ENCODE measurements at regions of chr17 and their contacts with region 1.

Region 1: DNA sequence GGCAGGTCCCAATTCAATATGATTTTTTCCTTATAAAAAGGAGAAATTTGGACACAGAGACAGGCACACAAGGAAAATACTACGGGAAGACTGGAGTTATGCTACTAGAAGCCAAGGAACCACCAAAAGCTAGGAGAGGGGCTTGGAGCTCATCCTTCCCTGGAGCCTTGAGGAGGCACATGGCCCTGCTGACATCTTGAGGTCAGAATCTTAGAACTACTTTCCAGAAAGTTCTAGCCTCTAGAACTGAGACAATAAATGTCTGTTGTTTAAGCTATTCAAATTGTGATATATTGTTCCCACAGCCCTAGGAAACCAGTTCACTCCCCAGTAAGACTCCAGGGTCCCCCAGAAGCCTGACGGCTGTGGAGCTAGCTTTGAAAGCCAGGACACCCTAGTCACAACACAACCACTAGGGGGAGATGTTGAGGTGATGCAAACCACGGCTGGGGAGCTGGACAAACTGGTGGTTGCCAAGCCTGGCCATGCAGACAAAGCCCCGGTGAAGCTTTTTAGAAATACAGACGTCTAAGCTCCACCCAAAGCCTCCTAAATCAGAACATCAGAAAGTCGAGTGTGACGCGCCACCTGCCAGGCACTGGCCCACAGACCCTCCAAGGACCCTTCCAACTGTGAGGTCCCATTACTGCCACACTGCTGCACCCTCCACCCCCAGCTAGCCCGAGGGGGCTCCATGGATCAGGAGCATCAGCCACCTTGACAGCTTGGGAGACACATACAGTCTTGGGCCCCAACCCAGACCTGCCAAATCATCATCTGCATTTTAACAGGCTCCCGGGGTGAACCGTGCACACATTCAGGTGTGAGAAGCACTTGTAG is 106.4 kb downstream of the SLC39A11 start:
- DNase-seq: peak; percentile 70
- ATAC-seq: peak; percentile 74
- H3K4me3 ChIP-seq: no peak overlapping the region
- H3K27ac ChIP-seq: peak overlapping the region; percentile 77; the same call in 1 of the 2 replicates
- H3K4me1 ChIP-seq: peaks cover 31 to 38% of the 10 kb centered on the region in 2 experiments
- H3K27me3 ChIP-seq: no peaks in the 10 kb centered on the region
- CTCF ChIP-seq: peak; percentile 80 to 99 (median 99)
- POLR2A ChIP-seq: no peak
- RAD21 ChIP-seq: peak; percentile 79

Region 2: DNA sequence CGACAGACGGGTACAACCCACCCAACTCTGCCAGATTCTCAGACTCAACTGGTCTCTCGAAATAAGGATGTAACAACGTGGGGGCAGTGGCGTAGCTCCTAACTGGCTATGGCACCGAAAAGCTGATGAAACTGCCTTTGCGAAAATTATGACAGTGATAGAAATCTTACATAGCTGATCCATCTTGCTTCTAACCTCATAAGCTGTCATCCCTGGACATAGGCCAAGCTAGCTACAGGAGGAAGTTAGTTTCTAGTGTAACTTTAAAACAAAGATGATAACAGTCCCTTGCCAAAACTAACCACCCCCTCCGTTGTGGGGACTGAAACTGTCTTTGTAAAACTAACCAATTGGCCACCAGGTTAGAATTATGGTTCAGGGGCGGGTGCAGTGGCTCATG is 113.7 kb before region 1 on chr17:
- CTCF ChIA-PET with region 1: no interaction called
- POLR2A ChIA-PET with region 1: no interaction called
- RAD21 ChIA-PET with region 1: no interaction called
- intact Hi-C with region 1: no loop called
- DNase-seq: no peak
- ATAC-seq: no peak
- H3K4me3 ChIP-seq: no peak overlapping the region
- H3K27ac ChIP-seq: no peak overlapping the region
- H3K4me1 ChIP-seq: 0 out of 4 replicates have a peak, but pooled peaks cover 0 to 4% of the 10 kb centered on the region in 2 experiments
- H3K27me3 ChIP-seq: no peaks in the 10 kb centered on the region
- CTCF ChIP-seq: no peak
- POLR2A ChIP-seq: no peak
- RAD21 ChIP-seq: no peak

Region 3: DNA sequence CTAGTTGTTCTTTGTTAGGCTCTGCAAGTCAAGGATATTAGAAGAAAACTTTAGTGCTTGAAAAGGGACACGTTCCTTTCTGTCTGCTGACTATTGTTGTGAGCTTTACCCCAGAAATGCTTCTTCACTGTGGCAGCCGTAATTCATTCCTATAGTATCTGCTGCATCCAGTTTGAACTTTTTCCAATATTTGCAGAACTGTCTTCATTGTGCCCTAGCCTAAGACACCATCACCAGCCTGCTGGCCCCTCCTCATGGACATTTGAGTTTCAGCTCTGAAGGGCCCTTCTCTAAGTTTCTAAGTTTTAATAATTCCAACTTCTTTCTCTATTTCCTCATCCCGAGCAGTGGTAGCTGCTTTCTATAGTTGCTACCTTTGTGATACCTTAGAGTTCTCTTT is 14.7 kb after region 1 on chr17:
- CTCF ChIA-PET with region 1: interaction called, 11 read pairs
- POLR2A ChIA-PET with region 1: no interaction called
- RAD21 ChIA-PET with region 1: no interaction called
- intact Hi-C with region 1: no loop called
- DNase-seq: no peak
- ATAC-seq: no peak
- H3K4me3 ChIP-seq: no peak overlapping the region
- H3K27ac ChIP-seq: no peak overlapping the region
- H3K4me1 ChIP-seq: peaks cover 4 to 9% of the 10 kb centered on the region in 2 experiments; a peak in 3 of 4 replicates
- H3K27me3 ChIP-seq: no peaks in the 10 kb centered on the region
- CTCF ChIP-seq: no peak
- POLR2A ChIP-seq: no peak
- RAD21 ChIP-seq: no peak

Region 4: GRCh38 chr17:73156166-73156840 is 170.2 kb after region 1 on chr17:
- CTCF ChIA-PET with region 1: interaction called, 35 read pairs
- POLR2A ChIA-PET with region 1: interaction called, 4 read pairs
- RAD21 ChIA-PET with region 1: interaction called, 5 to 9 read pairs
- intact Hi-C with region 1: loop called (anchors 1 kb)
- DNase-seq: peak; percentile 23
- ATAC-seq: peak; percentile 99
- H3K4me3 ChIP-seq: no peak overlapping the region; a peak in 1 of 4 replicates
- H3K27ac ChIP-seq: no peak overlapping the region
- H3K4me1 ChIP-seq: peaks cover 2 to 12% of the 10 kb centered on the region in 2 experiments; a peak in 2 of 4 replicates
- H3K27me3 ChIP-seq: no peaks in the 10 kb centered on the region
- CTCF ChIP-seq: peak; percentile 85 to 97 (median 93)
- POLR2A ChIP-seq: no peak
- RAD21 ChIP-seq: peak; percentile 94

Region 5: DNA sequence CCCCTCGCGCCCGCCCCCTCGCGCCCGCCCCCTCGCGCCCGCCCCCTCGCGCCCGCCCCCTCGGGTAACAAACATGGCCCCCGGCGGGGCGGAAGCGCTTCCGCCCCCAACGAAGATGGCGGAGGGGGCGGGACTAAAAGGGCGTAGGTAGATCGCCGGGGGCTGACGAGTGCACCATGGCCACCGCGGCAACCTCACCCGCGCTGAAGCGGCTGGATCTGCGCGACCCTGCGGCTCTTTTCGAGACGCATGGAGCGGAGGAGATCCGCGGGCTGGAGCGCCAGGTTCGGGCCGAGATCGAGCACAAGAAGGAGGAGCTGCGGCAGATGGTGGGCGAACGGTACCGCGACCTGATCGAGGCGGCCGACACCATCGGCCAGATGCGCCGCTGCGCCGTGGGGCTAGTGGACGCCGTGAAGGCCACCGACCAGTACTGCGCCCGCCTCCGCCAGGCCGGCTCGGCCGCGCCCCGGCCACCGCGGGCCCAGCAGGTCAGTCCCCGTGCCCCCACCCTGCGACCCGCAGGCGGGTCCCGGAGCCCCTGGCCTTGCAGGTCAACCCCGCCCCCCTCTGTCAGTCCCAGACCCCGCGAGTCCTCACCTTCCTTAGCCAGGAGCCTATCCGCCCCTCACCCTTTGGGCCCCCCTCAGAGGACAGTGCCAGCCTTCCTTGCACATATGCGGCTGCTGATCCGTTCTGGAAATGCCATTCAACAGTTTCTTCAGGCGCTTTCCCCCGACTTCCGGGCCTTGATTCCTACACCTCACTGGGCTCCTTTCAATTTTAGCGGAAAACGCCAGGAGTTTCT is 207.0 kb after region 1 on chr17 and contains the start of gene COG1:
- CTCF ChIA-PET with region 1: interaction called, 33 read pairs
- POLR2A ChIA-PET with region 1: interaction called, 5 read pairs
- RAD21 ChIA-PET with region 1: interaction called, 6 to 21 read pairs
- intact Hi-C with region 1: loop called (anchors 2 kb)
- DNase-seq: peak; percentile 76
- ATAC-seq: peak; percentile 75
- H3K4me3 ChIP-seq: peak within 1 kb of the TSS; percentile 68 to 88
- H3K27ac ChIP-seq: peak within 1 kb of the TSS; percentile 98
- H3K4me1 ChIP-seq: peaks cover 0 to 35% of the 10 kb centered on the region in 2 experiments; a peak in 3 of 4 replicates
- H3K27me3 ChIP-seq: no peaks in the 10 kb centered on the region
- CTCF ChIP-seq: 0 out of 6 replicates have a peak, but pooled peaks of 1 of the 3 experiments have one; percentile 7
- POLR2A ChIP-seq: peak; percentile 7
- RAD21 ChIP-seq: no peak
- total RNA-seq, gene COG1: 44.6 TPM

Region 6: DNA sequence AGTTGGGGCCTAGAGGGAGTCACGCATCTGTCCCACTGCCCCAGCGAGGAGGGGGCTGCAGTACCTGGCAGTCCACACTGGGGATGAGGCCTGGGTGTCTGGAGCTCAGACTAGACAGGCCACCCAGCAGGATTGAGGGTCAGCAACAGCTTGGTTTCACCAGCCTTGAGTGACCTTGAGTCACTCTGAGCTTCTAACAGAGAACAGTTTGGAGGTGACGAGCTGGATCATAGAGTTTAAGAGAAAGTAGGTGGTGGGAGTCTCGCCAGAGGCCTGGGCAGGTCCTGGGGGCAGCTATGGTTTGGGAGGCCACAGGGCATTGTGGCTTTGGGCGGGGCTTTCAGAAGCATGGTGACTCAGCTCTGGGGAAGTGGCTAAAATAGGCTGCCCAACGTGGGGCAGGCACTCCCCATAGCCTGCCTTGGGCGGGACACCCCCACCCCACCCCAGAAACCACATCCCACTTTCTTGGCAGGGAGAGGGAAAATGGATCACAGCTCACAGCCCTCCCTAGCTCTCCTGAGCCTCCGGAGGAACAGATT is 305.2 kb after region 1 on chr17:
- CTCF ChIA-PET with region 1: no interaction called
- POLR2A ChIA-PET with region 1: no interaction called
- RAD21 ChIA-PET with region 1: no interaction called
- intact Hi-C with region 1: no loop called
- DNase-seq: peak; percentile 79
- ATAC-seq: peak; percentile 83
- H3K4me3 ChIP-seq: peak overlapping the region; percentile 38 to 50
- H3K27ac ChIP-seq: peak overlapping the region; percentile 94
- H3K4me1 ChIP-seq: peaks cover 82 to 91% of the 10 kb centered on the region in 2 experiments
- H3K27me3 ChIP-seq: no peaks in the 10 kb centered on the region
- CTCF ChIP-seq: no peak
- POLR2A ChIP-seq: no peak
- RAD21 ChIP-seq: no peak

Measured in HCT116 (cell line).